GM12878 (cell line): ENCODE measurements at regions of chr6 and their contacts with region 1.

Region 1: GRCh38 chr6:33161354-33162331 is 30.6 kb downstream of the COL11A2 start:
- DNase-seq: no peak
- ATAC-seq: peak; percentile 96
- H3K4me3 ChIP-seq: peak overlapping the region; percentile 70; the same call in 1 of the 2 replicates
- H3K27ac ChIP-seq: no peak overlapping the region
- H3K4me1 ChIP-seq: peaks cover 4% of the 10 kb centered on the region
- H3K27me3 ChIP-seq: no peaks in the 10 kb centered on the region
- CTCF ChIP-seq: peak; percentile 89 to 97 (median 96); a peak in 5 of 6 replicates
- EP300 ChIP-seq: no peak
- POLR2A ChIP-seq: no peak
- RAD21 ChIP-seq: peak; percentile 64

Region 2: GRCh38 chr6:32912951-32913350 is 248.7 kb before region 1 on chr6:
- CTCF ChIA-PET with region 1: no interaction called
- POLR2A ChIA-PET with region 1: no interaction called
- RAD21 ChIA-PET with region 1: no interaction called
- SMC1A ChIA-PET with region 1: no interaction called
- in situ Hi-C with region 1: no loop called
- intact Hi-C with region 1: no loop called
- DNase-seq: no peak
- ATAC-seq: no peak
- H3K4me3 ChIP-seq: no peak overlapping the region
- H3K27ac ChIP-seq: no peak overlapping the region
- H3K4me1 ChIP-seq: no peaks in the 10 kb centered on the region
- H3K27me3 ChIP-seq: no peaks in the 10 kb centered on the region
- CTCF ChIP-seq: no peak
- EP300 ChIP-seq: no peak
- POLR2A ChIP-seq: no peak
- RAD21 ChIP-seq: no peak

Region 3: DNA sequence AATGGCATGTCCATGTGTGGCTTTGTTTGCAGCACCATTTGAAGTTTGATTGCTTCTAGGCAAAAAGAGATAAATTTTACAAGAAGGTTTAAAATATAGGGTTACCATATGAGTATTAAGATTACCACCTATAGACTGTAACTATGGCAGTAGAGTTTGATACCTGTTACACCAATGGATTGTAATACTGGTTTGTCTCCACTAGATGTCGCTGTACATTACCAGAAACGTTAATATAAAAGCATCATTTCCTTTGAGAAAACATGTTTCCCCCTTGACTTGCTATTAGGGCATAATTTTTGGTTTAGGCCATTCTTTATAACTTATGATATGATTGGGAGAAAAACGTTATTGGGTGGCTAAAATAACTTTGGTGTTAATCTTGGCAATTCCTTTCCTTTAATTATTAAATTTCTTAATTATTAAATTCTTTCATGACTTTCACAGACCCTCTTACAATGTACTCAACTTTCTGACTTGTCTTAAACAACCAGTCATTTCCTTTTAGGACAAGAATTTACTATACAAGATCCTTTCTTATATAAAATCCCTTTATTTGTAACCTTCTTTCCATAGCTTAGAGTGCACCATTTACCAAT is 43.0 kb before region 1 on chr6:
- CTCF ChIA-PET with region 1: interaction called, 184 read pairs
- POLR2A ChIA-PET with region 1: no interaction called
- RAD21 ChIA-PET with region 1: interaction called, 6 read pairs
- SMC1A ChIA-PET with region 1: interaction called, 17 read pairs
- in situ Hi-C with region 1: no loop called
- intact Hi-C with region 1: no loop called
- DNase-seq: no peak
- ATAC-seq: peak; percentile 45
- H3K4me3 ChIP-seq: no peak overlapping the region
- H3K27ac ChIP-seq: no peak overlapping the region
- H3K4me1 ChIP-seq: peaks cover 36% of the 10 kb centered on the region
- H3K27me3 ChIP-seq: peaks cover 0 to 2% of the 10 kb centered on the region in 2 experiments; a peak in 2 of 4 replicates
- CTCF ChIP-seq: peak; percentile 53 to 66 (median 61); a peak in 5 of 6 replicates
- EP300 ChIP-seq: no peak
- POLR2A ChIP-seq: no peak
- RAD21 ChIP-seq: peak; percentile 62

Region 4: GRCh38 chr6:33183071-33183683 is 21.5 kb after region 1 on chr6:
- CTCF ChIA-PET with region 1: no interaction called
- POLR2A ChIA-PET with region 1: no interaction called
- RAD21 ChIA-PET with region 1: no interaction called
- SMC1A ChIA-PET with region 1: no interaction called
- in situ Hi-C with region 1: no loop called
- intact Hi-C with region 1: no loop called
- DNase-seq: no peak
- ATAC-seq: no peak
- H3K4me3 ChIP-seq: no peak overlapping the region
- H3K27ac ChIP-seq: peak overlapping the region; percentile 48; the same call in 1 of the 2 replicates
- H3K4me1 ChIP-seq: peaks cover 6% of the 10 kb centered on the region
- H3K27me3 ChIP-seq: no peaks in the 10 kb centered on the region; a peak in 1 of 4 replicates
- CTCF ChIP-seq: no peak
- EP300 ChIP-seq: no peak
- POLR2A ChIP-seq: no peak
- RAD21 ChIP-seq: no peak

Region 5: DNA sequence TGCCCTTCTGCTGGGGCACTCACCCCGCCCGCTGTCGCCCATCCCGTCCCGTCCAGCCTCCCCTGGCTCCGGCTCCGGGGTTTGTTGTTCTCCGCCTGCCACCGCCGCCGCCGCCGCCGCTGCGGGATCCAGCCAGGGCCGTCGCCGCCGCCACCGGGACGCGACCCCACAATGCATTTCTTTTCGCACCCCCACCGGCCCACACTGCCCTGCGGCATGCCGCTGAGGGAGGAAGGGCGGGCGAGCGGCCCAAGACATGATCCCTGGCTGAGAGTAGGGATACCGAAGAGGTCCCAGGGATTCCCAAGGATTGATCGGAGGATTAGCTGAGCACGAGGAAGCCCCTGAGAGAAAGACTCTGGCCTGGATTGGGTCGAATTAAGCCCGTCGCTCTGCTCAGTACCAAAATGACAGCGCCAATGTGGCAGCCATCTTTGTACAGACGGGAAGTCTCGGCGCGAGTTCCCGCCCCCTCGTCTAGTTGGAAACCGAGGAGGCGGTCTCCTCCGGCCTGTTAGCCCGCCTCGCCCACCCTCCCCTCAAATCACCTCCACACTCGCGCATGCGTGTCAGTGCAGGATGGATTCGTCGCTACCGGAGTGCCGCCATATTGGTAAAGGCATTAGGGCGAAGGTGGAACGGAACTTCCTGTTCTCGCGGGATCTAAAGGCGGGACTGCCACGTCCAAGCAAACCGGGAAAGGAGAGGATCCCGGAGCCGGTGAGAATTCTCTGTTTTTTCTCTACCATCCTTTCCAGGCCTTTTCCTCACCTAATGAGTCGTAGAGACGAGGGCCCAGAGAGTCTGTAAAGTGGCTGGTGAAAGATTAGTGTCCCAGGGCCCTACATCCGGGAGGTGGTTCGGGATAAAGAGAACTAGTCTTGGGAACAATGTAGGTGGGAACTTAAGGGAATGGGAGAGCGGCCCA is 38.8 kb after region 1 on chr6 and contains the starts of genes RXRB and SLC39A7:
- CTCF ChIA-PET with region 1: interaction called, 9 read pairs
- POLR2A ChIA-PET with region 1: no interaction called
- RAD21 ChIA-PET with region 1: interaction called, 6 read pairs
- SMC1A ChIA-PET with region 1: interaction called, 4 read pairs
- in situ Hi-C with region 1: no loop called
- intact Hi-C with region 1: loop called (anchors 1 kb)
- DNase-seq: peak; percentile 99
- ATAC-seq: peak; percentile 77
- H3K4me3 ChIP-seq: peak within 1 kb of the TSS; percentile 95
- H3K27ac ChIP-seq: peak within 1 kb of the TSS; percentile 99
- H3K4me1 ChIP-seq: peaks cover 33% of the 10 kb centered on the region
- H3K27me3 ChIP-seq: no peaks in the 10 kb centered on the region
- CTCF ChIP-seq: no peak
- EP300 ChIP-seq: peak in 1 of 2 experiments; percentile 12; a peak in 1 of 4 replicates
- POLR2A ChIP-seq: peak; percentile 95
- RAD21 ChIP-seq: no peak
- polyA plus RNA-seq, gene RXRB: 0.71 to 1.6 TPM
- polyA plus RNA-seq, gene SLC39A7: 7.3 to 8.4 TPM